Activated CD8-positive, alpha-beta T cell treated with anti-CD3 and anti-CD28 coated beads for 36 hours (primary cell): ENCODE measurements at regions of chr15 and their contacts with region 1.

Region 1: DNA sequence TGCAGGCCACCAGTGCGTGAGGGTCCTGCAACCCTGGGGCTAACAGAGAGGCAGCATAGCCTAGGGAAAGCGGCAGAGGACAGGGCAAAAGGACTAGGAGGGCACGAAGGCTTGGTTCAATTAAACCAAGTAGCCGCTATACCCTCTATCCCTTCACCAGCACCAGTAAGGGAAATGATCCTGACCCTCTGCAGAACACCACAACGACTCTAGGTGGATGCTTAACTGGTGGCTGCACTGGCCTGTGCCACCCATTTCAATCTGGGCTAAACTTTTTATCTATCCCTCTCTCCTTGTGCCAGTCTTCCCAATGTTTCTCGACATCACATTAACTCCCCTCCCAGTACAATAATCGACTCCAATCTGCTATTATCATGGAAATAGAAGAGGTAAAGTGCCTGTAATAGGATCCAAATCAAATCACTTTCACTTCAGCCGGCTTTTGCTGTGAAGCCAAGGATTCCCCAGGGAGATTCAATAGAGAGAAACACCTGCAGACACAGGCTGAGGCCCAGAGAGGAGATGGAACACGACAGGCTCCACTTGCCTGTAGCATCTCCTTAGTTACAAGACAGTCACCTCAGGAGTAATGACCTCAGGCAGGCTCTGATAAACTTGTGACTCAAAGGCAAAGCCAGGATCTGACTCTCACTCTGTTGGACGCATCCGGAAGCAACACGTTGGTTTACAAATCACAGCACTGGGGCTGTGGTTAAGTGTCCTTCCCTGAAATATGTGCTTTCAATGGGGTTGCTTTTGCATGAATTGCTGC is 791.6 kb upstream of the ARRDC4 start:
- DNase-seq: no peak
- ATAC-seq: no peak
- H3K4me3 Mint-ChIP-seq: no peak overlapping the region
- H3K27ac Mint-ChIP-seq: no peak overlapping the region
- H3K4me1 Mint-ChIP-seq: no peaks in the 10 kb centered on the region
- H3K27me3 Mint-ChIP-seq: no peaks in the 10 kb centered on the region
- CTCF ChIP-seq: no peak

Region 2: DNA sequence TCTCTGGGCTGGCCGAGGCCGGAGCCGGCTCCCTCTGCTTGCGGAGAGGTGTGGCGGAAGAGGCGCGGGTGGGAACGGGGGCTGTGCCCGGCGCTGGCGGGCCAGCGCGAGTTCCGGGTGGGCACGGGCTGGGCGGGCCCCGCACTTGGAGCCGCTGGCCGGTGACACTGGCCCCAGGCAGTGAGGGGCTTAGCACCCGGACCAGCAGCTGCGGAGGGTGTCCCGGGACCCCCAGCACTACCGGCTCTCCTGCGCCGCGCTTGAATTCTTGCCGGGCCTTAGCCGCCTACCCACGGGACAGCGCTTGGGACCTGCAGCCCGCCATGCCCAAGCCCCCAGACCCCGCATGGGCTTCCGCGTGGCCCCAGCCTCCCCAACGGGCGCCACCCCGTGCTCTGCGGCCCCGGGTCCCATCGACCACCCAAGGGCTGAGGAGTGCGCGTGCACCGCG is 55.3 kb after region 1 on chr15:
- CTCF ChIA-PET with region 1: no interaction called
- POLR2A ChIA-PET with region 1: no interaction called
- intact Hi-C with region 1: loop called (anchors 10 kb)
- DNase-seq: no peak
- ATAC-seq: no peak
- H3K4me3 Mint-ChIP-seq: no peak overlapping the region
- H3K27ac Mint-ChIP-seq: no peak overlapping the region
- H3K4me1 Mint-ChIP-seq: no peaks in the 10 kb centered on the region
- H3K27me3 Mint-ChIP-seq: no peaks in the 10 kb centered on the region
- CTCF ChIP-seq: no peak